Mammary epithelial cell (primary cell): ENCODE measurements at regions of chr3 and their contacts with region 1.

Region 1: GRCh38 chr3:187745201-187746058 is at the start of gene BCL6:
- DNase-seq: peak; percentile 98
- H3K4me3 ChIP-seq: peak within 1 kb of the TSS; percentile 67 to 98 (median 78)
- H3K27ac ChIP-seq: peak within 1 kb of the TSS; percentile 100
- H3K4me1 ChIP-seq: peaks cover 37% of the 10 kb centered on the region
- H3K27me3 ChIP-seq: no peaks in the 10 kb centered on the region
- CTCF ChIP-seq: peak; percentile 2 to 6
- total RNA-seq, gene BCL6: 14.0 to 26.8 TPM

Region 2: DNA sequence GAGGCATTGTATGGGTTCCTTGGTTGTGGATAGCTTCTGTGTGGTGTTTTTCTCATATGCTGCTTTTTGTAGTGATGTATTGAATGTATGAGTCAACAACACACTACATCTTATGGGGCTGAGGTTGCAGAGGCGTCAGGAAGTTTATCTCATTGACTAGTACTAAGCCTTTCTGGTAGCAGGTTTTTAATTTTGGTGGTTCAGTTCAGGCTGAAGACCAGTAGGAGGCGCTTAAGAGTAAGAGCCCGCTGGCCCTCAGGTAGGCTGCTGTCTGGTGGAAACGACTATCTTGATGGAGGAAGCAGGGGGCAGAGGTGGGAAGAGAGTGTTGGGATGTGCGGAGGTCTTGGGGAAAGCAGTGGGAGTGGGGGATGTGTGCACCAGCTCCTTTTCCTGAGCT is 314.9 kb before region 1 on chr3:
- CTCF ChIA-PET with region 1: no interaction called
- dilution Hi-C with region 1: no loop called
- in situ Hi-C with region 1: no loop called
- intact Hi-C with region 1: no loop called
- DNase-seq: no peak
- H3K4me3 ChIP-seq: no peak overlapping the region
- H3K27ac ChIP-seq: no peak overlapping the region
- H3K4me1 ChIP-seq: no peaks in the 10 kb centered on the region
- H3K27me3 ChIP-seq: no peaks in the 10 kb centered on the region
- CTCF ChIP-seq: peak; percentile 13 to 26

Region 3: GRCh38 chr3:187979564-187979963 is 234.1 kb after region 1 on chr3:
- CTCF ChIA-PET with region 1: no interaction called
- dilution Hi-C with region 1: no loop called
- in situ Hi-C with region 1: no loop called
- intact Hi-C with region 1: loop called (anchors 2 kb)
- DNase-seq: no peak
- H3K4me3 ChIP-seq: no peak overlapping the region
- H3K27ac ChIP-seq: no peak overlapping the region
- H3K4me1 ChIP-seq: peaks cover 5% of the 10 kb centered on the region
- H3K27me3 ChIP-seq: no peaks in the 10 kb centered on the region
- CTCF ChIP-seq: no peak

Region 4: GRCh38 chr3:188061133-188061532 is 315.7 kb after region 1 on chr3:
- CTCF ChIA-PET with region 1: no interaction called
- dilution Hi-C with region 1: loop called (anchors 25 kb)
- in situ Hi-C with region 1: no loop called
- intact Hi-C with region 1: loop called (anchors 10 kb)
- DNase-seq: peak; percentile 59
- H3K4me3 ChIP-seq: no peak overlapping the region
- H3K27ac ChIP-seq: no peak overlapping the region
- H3K4me1 ChIP-seq: peaks cover 10% of the 10 kb centered on the region
- H3K27me3 ChIP-seq: no peaks in the 10 kb centered on the region
- CTCF ChIP-seq: peak in 1 of 2 donors; percentile 1

Region 5: GRCh38 chr3:188185717-188186251 is 440.4 kb after region 1 on chr3:
- CTCF ChIA-PET with region 1: interaction called, 3 read pairs
- dilution Hi-C with region 1: no loop called
- in situ Hi-C with region 1: no loop called
- intact Hi-C with region 1: loop called (anchors 10 kb)
- DNase-seq: peak; percentile 58
- H3K4me3 ChIP-seq: no peak overlapping the region
- H3K27ac ChIP-seq: peak overlapping the region; percentile 3
- H3K4me1 ChIP-seq: peaks cover 33% of the 10 kb centered on the region
- H3K27me3 ChIP-seq: no peaks in the 10 kb centered on the region
- CTCF ChIP-seq: no peak

Region 6: DNA sequence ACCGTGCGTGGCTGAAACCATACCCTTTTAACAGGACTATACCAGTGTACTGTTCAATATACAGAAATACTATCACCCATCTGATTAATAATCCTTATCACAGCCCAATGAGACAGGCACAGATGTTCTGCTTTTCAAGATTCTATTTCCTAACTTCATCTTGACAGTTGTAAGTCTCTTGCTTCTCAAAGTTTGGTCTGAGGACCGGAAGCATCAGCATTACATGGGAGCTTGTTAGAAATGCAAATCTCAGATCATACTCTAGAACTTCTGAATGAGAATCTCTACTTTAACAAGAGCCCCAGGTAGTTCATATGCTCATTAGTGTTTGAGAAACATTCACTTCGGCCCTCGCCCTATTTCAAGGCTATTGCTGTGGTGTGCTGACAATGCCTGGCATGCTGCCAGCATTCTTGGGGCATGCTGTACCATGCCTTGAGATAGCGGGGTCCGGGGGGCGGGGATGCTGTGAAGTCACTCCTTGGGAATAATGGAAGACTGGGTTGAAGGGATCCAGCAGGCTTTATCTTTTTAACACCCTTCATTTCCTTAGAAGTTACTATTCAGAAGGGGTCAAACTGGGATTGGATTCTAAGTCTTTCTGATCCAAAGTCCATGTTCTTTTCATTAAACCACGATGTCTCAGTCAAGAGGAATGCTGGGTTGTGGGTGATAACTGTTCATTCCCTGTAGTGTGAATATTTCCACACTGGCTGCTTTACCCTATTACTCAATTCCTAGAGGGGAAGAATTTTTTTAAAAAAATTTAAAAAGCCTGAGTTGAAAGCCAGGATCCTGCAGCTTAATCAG is 603.2 kb after region 1 on chr3:
- CTCF ChIA-PET with region 1: interaction called, 6 read pairs
- dilution Hi-C with region 1: no loop called
- in situ Hi-C with region 1: no loop called
- intact Hi-C with region 1: loop called (anchors 1 kb)
- DNase-seq: peak; percentile 95
- H3K4me3 ChIP-seq: peak overlapping the region in 1 of 3 experiments; percentile 8
- H3K27ac ChIP-seq: peak overlapping the region; percentile 94
- H3K4me1 ChIP-seq: peaks cover 38% of the 10 kb centered on the region
- H3K27me3 ChIP-seq: no peaks in the 10 kb centered on the region
- CTCF ChIP-seq: no peak

Region 7: DNA sequence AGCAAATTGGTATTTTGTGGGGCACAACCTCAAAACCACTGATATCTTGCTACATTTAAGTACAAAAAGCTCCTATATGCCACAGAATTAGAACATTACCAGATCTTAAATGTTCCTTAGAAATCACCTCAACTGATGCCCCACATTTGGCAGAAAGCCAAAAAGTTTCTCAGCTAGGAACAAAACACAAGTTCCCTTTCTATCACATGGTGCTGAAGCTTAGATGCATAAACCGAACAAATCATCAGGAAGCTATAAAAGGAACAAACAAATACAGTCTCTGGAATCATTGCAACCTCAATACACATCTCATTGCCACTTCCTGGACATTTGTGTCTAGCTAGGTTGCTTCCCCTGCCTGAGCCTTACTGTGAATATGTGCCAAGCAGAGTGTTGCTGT is 901.2 kb after region 1 on chr3:
- CTCF ChIA-PET with region 1: no interaction called
- dilution Hi-C with region 1: loop called (anchors 25 kb)
- in situ Hi-C with region 1: no loop called
- intact Hi-C with region 1: no loop called
- DNase-seq: no peak
- H3K4me3 ChIP-seq: no peak overlapping the region
- H3K27ac ChIP-seq: no peak overlapping the region
- H3K4me1 ChIP-seq: no peaks in the 10 kb centered on the region
- H3K27me3 ChIP-seq: no peaks in the 10 kb centered on the region
- CTCF ChIP-seq: no peak

Region 8: DNA sequence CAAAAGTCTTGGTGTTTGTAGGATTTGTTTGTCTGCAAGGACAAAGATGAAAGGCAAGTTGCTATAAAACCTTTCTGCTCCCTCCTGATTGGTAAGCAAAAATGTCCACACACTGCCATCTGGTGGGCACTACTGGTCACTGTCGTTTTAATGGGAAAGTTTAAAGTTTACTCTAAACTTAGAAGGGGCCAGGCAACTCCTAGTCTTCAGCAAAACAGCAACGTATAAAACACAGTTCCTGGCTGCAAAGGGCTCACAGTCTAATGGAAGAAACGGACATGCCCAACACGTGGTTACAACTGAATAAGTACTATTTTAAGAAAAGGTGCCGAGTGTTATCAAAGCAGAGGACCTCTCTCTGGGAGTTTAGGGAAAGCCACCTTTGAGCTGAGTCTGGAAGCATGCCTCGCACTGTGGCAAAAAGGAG is 1402.7 kb after region 1 on chr3:
- CTCF ChIA-PET with region 1: interaction called, 4 read pairs
- dilution Hi-C with region 1: loop called (anchors 25 kb)
- in situ Hi-C with region 1: loop called in 1 of 2 experiments (anchors 10 kb)
- intact Hi-C with region 1: no loop called
- DNase-seq: peak; percentile 37
- H3K4me3 ChIP-seq: no peak overlapping the region
- H3K27ac ChIP-seq: no peak overlapping the region
- H3K4me1 ChIP-seq: no peaks in the 10 kb centered on the region
- H3K27me3 ChIP-seq: no peaks in the 10 kb centered on the region
- CTCF ChIP-seq: peak; percentile 76 to 86